AG04450 (cell line): ENCODE measurements at regions of chr17 and their contacts with region 1.

Region 1: DNA sequence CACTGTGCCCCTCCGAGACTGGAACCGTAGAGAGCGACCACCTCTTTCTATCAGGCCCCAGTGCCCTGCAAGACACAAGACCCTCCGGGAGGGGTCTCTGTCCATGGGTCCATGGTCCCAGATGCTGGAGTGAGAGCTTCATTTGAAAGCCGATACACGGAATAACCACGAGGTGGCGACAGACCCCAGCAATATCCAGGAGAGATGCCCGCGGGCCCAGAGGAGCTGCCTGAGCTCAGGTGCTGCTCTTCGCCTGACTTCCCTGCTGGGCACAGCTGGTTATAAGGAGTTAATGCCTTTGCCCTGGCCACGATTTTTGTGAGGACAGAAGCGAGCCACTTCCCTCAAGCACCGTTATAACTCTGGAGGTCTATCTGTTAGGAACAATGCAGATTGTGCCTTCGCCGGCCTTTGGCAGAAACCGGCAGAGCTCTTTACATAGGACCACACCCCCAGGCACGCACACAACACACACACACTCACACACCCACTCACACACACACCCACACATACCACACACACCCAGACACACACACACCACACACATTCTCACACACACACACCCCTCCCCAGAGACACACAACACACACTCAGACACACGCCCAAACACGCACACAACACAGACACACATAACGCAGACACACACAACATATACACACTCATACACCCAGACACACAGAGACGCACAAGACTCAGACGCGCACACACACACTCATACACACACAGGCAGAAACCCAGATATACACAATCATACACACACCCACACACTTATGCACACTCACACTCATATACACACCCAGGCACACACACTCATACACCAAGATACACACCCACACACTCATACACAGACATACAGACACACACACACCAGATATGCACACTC is 436.4 kb downstream of the SOX9 start:
- DNase-seq: no peak
- H3K4me3 ChIP-seq: no peak overlapping the region
- H3K27ac ChIP-seq: no peak overlapping the region
- H3K27me3 ChIP-seq: no peaks in the 10 kb centered on the region
- CTCF ChIP-seq: peak; percentile 91

Region 2: GRCh38 chr17:72574675-72575510 is 17.7 kb after region 1 on chr17:
- CTCF ChIA-PET with region 1: interaction called, 41 read pairs
- POLR2A ChIA-PET with region 1: no interaction called
- DNase-seq: no peak
- H3K4me3 ChIP-seq: no peak overlapping the region
- H3K27ac ChIP-seq: no peak overlapping the region
- H3K27me3 ChIP-seq: no peaks in the 10 kb centered on the region
- CTCF ChIP-seq: no peak

Region 3: DNA sequence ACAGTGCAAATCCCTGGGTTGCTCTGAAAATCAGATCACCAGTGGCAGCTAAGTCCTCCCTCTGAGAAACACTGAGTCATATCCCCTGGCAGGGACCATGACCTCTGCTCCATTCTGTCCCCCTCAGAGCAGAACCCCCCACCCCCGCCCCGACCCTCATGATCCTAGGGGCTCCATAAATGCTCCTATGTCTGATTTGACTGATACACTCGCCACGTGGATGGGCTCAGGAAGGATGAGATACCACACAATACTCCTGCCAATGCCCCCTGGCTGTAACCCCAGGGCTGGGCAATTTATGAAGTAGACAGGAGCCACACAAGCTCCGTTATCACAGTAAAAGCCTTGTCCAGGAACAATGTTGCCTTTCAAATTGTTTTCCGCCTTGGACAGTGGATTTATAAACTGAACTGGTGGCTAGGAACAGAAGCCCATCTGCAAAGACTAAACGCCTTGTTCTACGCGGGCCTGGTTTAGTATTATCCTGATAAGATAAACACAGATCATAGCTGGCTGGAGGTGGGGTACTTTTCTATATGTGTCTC is 140.5 kb after region 1 on chr17:
- CTCF ChIA-PET with region 1: interaction called, 14 read pairs
- POLR2A ChIA-PET with region 1: no interaction called
- DNase-seq: no peak
- H3K4me3 ChIP-seq: no peak overlapping the region
- H3K27ac ChIP-seq: no peak overlapping the region
- H3K27me3 ChIP-seq: no peaks in the 10 kb centered on the region
- CTCF ChIP-seq: no peak

Region 4: GRCh38 chr17:72795946-72796345 is 238.8 kb after region 1 on chr17:
- CTCF ChIA-PET with region 1: no interaction called
- POLR2A ChIA-PET with region 1: no interaction called
- DNase-seq: no peak
- H3K4me3 ChIP-seq: no peak overlapping the region
- H3K27ac ChIP-seq: no peak overlapping the region
- H3K27me3 ChIP-seq: no peaks in the 10 kb centered on the region
- CTCF ChIP-seq: no peak

Region 5: DNA sequence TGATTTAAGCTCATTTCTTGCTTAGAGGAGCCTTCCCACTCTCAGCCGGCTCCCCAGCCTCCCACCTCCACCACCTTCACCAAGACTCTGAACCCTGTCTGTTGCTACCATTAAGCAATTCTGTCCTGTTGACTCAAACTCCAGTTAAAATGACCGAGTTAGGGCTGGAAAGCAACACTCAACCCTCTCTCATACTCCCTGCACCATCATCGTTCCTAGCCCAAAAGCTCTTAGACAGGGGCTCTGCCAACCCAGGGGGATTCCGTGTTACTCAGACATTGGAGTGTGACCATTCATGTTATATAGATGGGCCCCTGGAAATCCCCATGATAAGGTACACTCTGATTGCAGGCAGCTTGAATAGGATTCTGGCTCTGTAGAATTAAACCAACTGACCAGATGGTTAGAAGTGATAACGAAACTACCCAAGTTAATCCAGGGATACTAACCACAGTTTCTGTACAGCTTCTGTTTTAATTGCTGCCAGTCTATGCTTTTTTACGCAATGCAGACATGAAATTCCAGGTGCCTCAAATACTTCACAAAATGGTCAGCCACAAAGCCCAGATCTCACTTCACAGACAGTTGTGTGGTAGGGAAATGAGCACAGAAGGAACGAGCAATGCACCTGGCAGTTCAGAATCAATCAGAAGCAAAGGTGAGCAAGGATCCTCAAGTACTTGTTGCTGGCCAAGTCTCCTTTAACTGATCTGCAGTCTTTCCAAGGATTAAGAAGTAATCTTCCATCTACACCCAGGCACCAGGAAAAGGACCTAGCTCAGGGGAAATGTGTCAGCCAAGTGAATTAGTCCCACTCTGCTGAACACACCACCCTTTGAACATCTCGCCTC is 609.8 kb after region 1 on chr17:
- CTCF ChIA-PET with region 1: interaction called, 18 read pairs
- POLR2A ChIA-PET with region 1: no interaction called
- DNase-seq: no peak
- H3K4me3 ChIP-seq: peak overlapping the region; percentile 57
- H3K27ac ChIP-seq: no peak overlapping the region
- H3K27me3 ChIP-seq: peaks cover 60% of the 10 kb centered on the region
- CTCF ChIP-seq: no peak

Region 6: GRCh38 chr17:73255671-73256181 is 698.5 kb after region 1 on chr17:
- CTCF ChIA-PET with region 1: interaction called, 15 read pairs
- POLR2A ChIA-PET with region 1: no interaction called
- DNase-seq: no peak
- H3K4me3 ChIP-seq: no peak overlapping the region
- H3K27ac ChIP-seq: no peak overlapping the region
- H3K27me3 ChIP-seq: no peaks in the 10 kb centered on the region
- CTCF ChIP-seq: peak; percentile 97